ENCODE measurements at regions of chr2 and their contacts with region 1.

Region 1: GRCh38 chr2:9873337-9873736 is 30.1 kb downstream of the TAF1B start:
- DNase-seq: no peak
- ATAC-seq: no peak
- H3K4me3 ChIP-seq: no peak overlapping the region
- H3K4me3 Mint-ChIP-seq: no peak overlapping the region
- H3K27ac ChIP-seq: no peak overlapping the region
- H3K27ac Mint-ChIP-seq: no peak overlapping the region
- H3K4me1 ChIP-seq: no peaks in the 10 kb centered on the region
- H3K4me1 Mint-ChIP-seq: no peaks in the 10 kb centered on the region
- H3K27me3 ChIP-seq: no peaks in the 10 kb centered on the region
- H3K27me3 Mint-ChIP-seq: no peaks in the 10 kb centered on the region

Region 2: DNA sequence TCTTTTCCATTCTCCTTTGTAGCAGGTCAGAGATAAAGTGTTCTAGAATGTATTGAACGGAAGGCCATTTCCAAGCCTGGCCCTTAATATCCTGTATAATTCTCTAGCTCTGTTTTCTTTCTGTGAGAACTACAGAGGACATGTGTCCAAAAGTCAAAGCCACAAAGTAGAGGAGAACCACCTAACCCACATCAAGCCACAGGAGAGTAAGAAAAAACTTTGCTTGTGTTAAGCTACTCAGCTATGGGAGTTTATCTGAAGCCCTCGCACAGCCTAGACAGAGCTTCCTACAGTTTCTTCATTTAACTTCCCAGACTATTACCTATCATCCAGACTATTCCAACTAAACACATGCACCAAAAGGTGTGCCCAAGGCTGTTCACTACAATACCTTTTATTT is 339.7 kb before region 1 on chr2:
- CTCF ChIA-PET with region 1: interaction called in 1 of 2 experiments, 13 read pairs
- POLR2A ChIA-PET with region 1: no interaction called
- DNase-seq: no peak
- ATAC-seq: no peak
- H3K4me3 ChIP-seq: no peak overlapping the region
- H3K4me3 Mint-ChIP-seq: no peak overlapping the region
- H3K27ac ChIP-seq: no peak overlapping the region
- H3K27ac Mint-ChIP-seq: no peak overlapping the region
- H3K4me1 ChIP-seq: no peaks in the 10 kb centered on the region
- H3K4me1 Mint-ChIP-seq: peaks cover 0 to 20% (median 17%) of the 10 kb centered on the region in 3 donors
- H3K27me3 ChIP-seq: no peaks in the 10 kb centered on the region
- H3K27me3 Mint-ChIP-seq: no peaks in the 10 kb centered on the region

Region 3: DNA sequence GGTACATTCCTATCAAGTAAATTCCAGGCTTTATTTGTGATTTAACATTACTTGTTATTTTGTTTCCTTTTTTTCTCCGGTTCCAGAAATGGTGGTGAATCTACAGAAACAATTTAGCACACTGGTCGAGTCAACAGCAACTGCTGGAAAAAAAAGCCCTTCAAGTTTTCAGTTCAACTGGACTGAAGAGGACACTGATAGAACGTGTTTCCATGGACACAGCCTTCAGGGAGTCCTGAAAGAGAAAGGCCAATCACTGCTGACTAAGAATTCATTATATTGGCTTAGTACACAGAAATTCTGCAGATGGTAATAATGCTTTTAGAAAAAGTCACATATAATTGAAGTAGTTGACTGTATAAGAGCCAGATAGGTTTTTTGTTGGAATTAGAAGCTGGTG is 46.2 kb after region 1 on chr2:
- CTCF ChIA-PET with region 1: no interaction called
- POLR2A ChIA-PET with region 1: no interaction called
- DNase-seq: no peak
- ATAC-seq: no peak
- H3K4me3 ChIP-seq: no peak overlapping the region
- H3K4me3 Mint-ChIP-seq: no peak overlapping the region
- H3K27ac ChIP-seq: no peak overlapping the region
- H3K27ac Mint-ChIP-seq: no peak overlapping the region
- H3K4me1 ChIP-seq: no peaks in the 10 kb centered on the region
- H3K4me1 Mint-ChIP-seq: no peaks in the 10 kb centered on the region
- H3K27me3 ChIP-seq: no peaks in the 10 kb centered on the region
- H3K27me3 Mint-ChIP-seq: no peaks in the 10 kb centered on the region

Measured in T-cell (primary cell).